ENCODE measurements at regions of chr15 and their contacts with region 1.

Region 1: GRCh38 chr15:40274350-40275274 is 8.3 kb downstream of the ANKRD63 start:
- DNase-seq: peak; percentile 92
- H3K4me3 Mint-ChIP-seq: no peak overlapping the region
- H3K27ac Mint-ChIP-seq: no peak overlapping the region
- H3K4me1 Mint-ChIP-seq: peaks cover 2% of the 10 kb centered on the region
- H3K27me3 Mint-ChIP-seq: peaks cover 23% of the 10 kb centered on the region

Region 2: GRCh38 chr15:39782441-39783138 is 492.0 kb before region 1 on chr15 and contains the start of gene FSIP1:
- CTCF ChIA-PET with region 1: interaction called, 5 read pairs
- intact Hi-C with region 1: loop called (anchors 1 kb)
- DNase-seq: peak; percentile 98
- H3K4me3 Mint-ChIP-seq: peak within 1 kb of the TSS; percentile 77
- H3K27ac Mint-ChIP-seq: peak within 1 kb of the TSS; percentile 64
- H3K4me1 Mint-ChIP-seq: peaks cover 43% of the 10 kb centered on the region
- H3K27me3 Mint-ChIP-seq: no peaks in the 10 kb centered on the region
- total RNA-seq, gene FSIP1: 0.21 to 0.27 TPM

Region 3: DNA sequence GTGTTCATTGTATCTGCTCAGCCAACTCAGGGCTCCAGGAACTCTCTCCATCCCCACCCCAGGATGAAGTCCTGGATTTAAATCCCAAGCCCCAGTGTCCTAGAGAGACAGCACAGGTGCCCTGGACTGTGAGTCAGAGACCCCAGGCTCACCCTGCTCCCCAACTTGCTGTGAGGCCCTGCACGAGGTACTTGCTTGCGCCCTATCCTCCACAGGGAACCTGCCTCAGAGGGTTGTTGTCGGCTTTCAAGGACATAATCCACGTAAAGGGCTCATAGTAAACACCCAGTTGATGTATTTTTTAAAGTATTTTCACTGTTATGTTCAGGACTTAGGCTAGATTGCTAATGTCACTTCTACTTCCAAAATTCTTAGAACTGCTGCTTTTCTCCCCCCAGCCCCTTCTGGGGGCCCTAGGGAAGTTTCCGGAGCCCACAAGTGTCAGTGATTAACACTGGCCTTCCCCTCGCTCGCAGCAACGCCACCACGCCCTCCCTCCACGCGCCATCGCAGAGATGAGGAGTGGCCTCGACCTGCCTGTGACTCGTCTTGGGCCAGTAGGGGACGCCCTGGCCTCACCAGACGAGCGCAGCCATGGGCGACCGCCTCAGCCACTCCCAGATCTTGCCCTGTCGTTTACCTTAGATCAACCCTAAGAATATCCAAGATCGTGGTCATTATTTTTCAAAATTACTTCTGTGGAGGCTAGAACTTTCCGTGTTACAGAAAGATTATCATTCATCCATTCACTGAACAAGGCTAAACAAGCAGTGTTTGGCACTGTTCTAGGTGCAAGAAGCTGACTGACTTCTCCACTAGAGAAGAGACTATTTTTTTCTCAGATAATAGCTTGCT is 229.7 kb before region 1 on chr15:
- CTCF ChIA-PET with region 1: interaction called, 105 read pairs
- intact Hi-C with region 1: loop called (anchors 1 kb)
- DNase-seq: peak; percentile 96
- H3K4me3 Mint-ChIP-seq: peak overlapping the region; percentile 45
- H3K27ac Mint-ChIP-seq: peak overlapping the region; percentile 50
- H3K4me1 Mint-ChIP-seq: peaks cover 70% of the 10 kb centered on the region
- H3K27me3 Mint-ChIP-seq: no peaks in the 10 kb centered on the region

Region 4: GRCh38 chr15:40160689-40161688 is 113.6 kb before region 1 on chr15 and contains the start of gene BUB1B:
- CTCF ChIA-PET with region 1: interaction called, 16 read pairs
- intact Hi-C with region 1: no loop called
- DNase-seq: peak; percentile 96
- H3K4me3 Mint-ChIP-seq: no peak within 1 kb of the TSS
- H3K27ac Mint-ChIP-seq: no peak within 1 kb of the TSS
- H3K4me1 Mint-ChIP-seq: peaks cover 6% of the 10 kb centered on the region
- H3K27me3 Mint-ChIP-seq: no peaks in the 10 kb centered on the region
- total RNA-seq, gene BUB1B: 102 to 106 TPM

Region 5: GRCh38 chr15:40263024-40263754 is 11.4 kb before region 1 on chr15:
- CTCF ChIA-PET with region 1: interaction called, 46 read pairs
- intact Hi-C with region 1: no loop called
- DNase-seq: no peak
- H3K4me3 Mint-ChIP-seq: no peak overlapping the region
- H3K27ac Mint-ChIP-seq: no peak overlapping the region
- H3K4me1 Mint-ChIP-seq: no peaks in the 10 kb centered on the region
- H3K27me3 Mint-ChIP-seq: no peaks in the 10 kb centered on the region

Region 6: DNA sequence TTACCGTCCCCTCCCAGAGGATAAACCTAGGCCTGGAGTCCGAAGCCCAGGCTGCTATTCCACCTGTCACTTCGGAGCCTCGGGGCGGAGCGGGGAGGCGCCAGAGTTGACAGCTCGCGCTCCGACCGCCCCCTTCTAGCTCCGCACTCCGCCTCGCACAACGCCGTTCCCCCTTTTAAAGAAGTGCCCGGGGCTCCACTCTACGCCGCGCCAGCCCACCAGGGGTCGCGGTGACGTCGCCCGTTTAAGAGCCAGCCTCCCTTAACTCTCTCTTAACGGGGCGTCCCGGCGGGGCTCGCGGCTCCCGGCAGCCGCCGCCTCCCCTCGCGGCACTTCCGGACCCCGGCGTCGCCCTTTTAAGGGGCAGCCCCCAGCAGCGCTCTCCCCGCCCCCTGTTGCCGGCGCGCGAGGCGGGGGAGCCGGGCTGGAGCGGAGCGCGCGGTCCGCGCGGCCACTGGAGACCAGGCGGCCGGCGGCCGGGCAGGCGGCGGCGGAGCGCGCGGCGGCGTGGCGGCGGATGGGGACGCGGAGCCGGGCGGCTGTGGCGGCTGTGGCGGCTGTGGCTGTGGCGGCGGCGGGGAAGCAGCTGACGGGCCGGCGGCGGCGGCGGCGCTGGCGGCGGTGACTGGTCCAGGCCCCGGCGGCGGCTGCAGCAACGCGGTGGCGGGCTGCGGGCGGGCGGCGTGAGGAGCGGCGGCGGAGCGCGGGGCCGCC is 48.8 kb after region 1 on chr15 and contains the start of gene INAFM2:
- CTCF ChIA-PET with region 1: interaction called, 365 read pairs
- intact Hi-C with region 1: no loop called
- DNase-seq: peak; percentile 77
- H3K4me3 Mint-ChIP-seq: peak within 1 kb of the TSS; percentile 73
- H3K27ac Mint-ChIP-seq: no peak within 1 kb of the TSS
- H3K4me1 Mint-ChIP-seq: peaks cover 22% of the 10 kb centered on the region
- H3K27me3 Mint-ChIP-seq: no peaks in the 10 kb centered on the region
- total RNA-seq, gene INAFM2: 4.9 to 6.5 TPM

Region 7: DNA sequence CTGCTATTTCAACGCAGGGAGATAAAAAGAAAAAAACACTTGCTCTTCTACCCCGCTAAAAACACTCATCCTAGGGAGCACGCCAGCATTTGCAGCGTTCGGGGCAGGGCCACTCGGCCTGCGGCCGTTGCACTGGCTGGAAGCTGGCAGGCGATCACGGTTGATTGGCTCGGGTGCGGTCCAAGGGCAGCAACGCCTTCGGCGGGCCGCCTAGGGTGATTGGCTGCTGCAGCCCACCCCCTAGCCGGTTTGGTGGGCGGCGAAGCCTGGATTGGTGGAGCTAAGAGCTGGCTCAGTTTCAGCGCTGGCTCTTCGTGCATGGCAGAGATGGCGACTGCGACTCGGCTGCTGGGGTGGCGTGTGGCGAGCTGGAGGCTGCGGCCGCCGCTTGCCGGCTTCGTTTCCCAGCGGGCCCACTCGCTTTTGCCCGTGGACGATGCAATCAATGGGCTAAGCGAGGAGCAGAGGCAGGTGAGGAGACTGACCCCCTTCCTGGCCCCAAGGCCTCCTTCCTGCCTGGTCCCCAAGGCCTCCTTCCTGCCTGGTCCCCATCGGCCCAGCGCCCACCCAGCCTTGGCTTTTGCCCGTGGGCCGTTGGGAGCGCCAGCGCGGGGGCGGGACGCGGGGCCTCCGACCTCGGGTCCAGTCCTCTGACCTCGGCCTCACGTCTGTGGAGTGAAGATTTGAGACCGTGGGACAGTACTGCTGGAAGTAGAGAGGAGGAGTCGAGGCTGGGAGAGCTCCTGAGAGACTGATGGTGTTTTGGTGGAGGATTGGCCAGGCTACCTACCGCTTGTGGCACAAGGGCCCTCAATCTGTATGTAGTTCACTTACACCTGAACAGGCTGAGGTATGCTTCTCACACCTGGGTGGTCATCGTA is 131.1 kb after region 1 on chr15 and contains the start of gene IVD:
- CTCF ChIA-PET with region 1: no interaction called
- intact Hi-C with region 1: no loop called
- DNase-seq: peak; percentile 94
- H3K4me3 Mint-ChIP-seq: peak within 1 kb of the TSS; percentile 83
- H3K27ac Mint-ChIP-seq: peak within 1 kb of the TSS; percentile 71
- H3K4me1 Mint-ChIP-seq: peaks cover 56% of the 10 kb centered on the region
- H3K27me3 Mint-ChIP-seq: no peaks in the 10 kb centered on the region
- total RNA-seq, gene IVD: 33.1 to 34.1 TPM

Region 8: GRCh38 chr15:41180206-41180789 is 905.7 kb after region 1 on chr15:
- CTCF ChIA-PET with region 1: no interaction called
- intact Hi-C with region 1: no loop called
- DNase-seq: no peak
- H3K4me3 Mint-ChIP-seq: no peak overlapping the region
- H3K27ac Mint-ChIP-seq: no peak overlapping the region
- H3K4me1 Mint-ChIP-seq: no peaks in the 10 kb centered on the region
- H3K27me3 Mint-ChIP-seq: no peaks in the 10 kb centered on the region